Activated naive CD4-positive, alpha-beta T cell treated with anti-CD3 and anti-CD28 coated beads for 36 hours (primary cell): ENCODE measurements at regions of chr16 and their contacts with region 1.

Region 1: GRCh38 chr16:2867987-2868789 is 10.2 kb upstream of the PRSS22 start:
- DNase-seq: peak; percentile 98
- H3K4me3 Mint-ChIP-seq: peak overlapping the region; percentile 89
- H3K27ac Mint-ChIP-seq: peak overlapping the region; percentile 89
- H3K4me1 Mint-ChIP-seq: peaks cover 5% of the 10 kb centered on the region
- H3K27me3 Mint-ChIP-seq: no peaks in the 10 kb centered on the region

Region 2: DNA sequence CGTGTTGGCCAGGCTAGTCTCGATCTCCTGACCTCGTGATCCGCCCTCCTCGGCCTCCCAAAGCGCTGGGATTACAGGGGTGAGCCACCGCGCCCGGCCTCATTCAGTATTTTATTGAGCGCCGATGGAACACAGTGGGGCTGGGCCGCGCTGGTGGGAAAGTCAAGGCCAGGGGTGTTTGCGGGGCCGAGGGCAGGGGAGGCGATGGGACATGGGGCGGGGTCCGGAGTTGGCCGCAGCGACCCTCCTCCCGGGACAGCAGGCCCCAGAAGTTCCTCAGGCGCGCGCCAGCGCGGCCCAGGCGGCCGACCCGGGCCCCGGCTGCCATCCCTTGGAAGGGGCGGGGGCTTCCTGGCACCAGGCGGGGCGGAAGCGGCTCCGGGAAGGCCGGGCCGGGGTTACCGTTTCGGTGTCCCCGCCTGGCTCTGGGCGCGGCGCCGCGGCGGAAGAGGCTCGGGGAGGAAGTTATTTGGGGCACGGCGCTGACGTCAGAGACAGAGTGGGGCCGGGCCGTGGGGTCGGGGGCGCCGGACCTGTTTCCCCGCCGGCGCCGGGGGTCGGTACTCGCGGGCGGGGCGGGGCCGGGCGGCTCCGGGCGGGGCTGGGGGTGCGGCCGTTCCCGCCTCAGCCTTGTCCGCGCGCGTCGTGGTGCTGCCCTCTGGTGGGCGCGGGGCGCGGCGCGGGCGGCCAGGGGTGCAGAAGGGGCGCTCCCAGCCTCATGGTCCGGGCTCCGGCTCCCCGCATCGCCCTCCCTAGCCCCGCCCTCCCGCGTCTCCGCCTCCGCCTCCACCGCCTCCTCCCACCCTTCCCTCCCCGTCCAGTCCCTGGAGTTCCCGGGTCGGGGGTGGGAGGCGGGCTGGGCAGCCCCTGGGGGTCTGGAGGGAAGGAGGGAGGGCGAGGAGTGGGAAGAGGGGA is 147.2 kb before region 1 on chr16:
- CTCF ChIA-PET with region 1: interaction called, 3 read pairs
- intact Hi-C with region 1: loop called (anchors 1 kb)
- DNase-seq: peak; percentile 92
- H3K4me3 Mint-ChIP-seq: peak overlapping the region; percentile 82
- H3K27ac Mint-ChIP-seq: peak overlapping the region; percentile 85
- H3K4me1 Mint-ChIP-seq: no peaks in the 10 kb centered on the region
- H3K27me3 Mint-ChIP-seq: peaks cover 2% of the 10 kb centered on the region

Region 3: DNA sequence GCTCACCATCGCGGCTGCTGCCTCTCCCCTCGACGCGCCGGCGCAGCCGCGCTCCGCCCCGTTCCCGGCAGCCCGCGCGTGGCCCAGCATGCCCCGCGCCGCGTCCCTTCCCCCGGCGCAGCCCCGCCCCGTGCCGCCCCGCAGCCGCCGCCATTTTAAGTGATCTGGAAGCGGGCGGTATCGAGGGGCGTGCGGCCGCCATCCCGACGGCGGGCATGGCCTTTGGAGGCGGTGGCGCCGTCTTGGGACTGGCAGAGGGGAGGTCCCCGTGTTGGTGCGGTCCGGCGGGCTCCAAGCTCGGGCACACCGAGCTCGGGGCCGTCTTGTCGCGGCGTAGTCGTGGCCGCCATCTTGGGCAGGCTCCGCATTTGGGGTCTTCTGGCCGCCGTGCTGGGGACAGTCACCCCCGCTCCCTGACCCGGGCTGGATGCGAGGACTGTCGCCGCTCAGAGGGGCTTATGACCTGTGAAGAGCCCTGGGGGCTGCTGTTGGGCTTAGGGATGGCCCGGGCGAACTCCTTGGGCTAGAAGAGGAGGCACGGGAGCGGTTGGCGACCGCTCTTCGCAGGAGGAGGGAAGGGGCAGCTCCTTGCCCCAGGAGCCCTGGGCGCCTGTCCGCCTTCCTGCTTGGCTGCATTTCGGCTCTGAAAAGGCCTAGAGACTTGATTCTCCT is 90.8 kb before region 1 on chr16 and contains the start of gene ELOB:
- CTCF ChIA-PET with region 1: interaction called, 3 read pairs
- intact Hi-C with region 1: loop called (anchors 2 kb)
- DNase-seq: peak; percentile 91
- H3K4me3 Mint-ChIP-seq: peak within 1 kb of the TSS; percentile 94
- H3K27ac Mint-ChIP-seq: peak within 1 kb of the TSS; percentile 96
- H3K4me1 Mint-ChIP-seq: peaks cover 31% of the 10 kb centered on the region
- H3K27me3 Mint-ChIP-seq: no peaks in the 10 kb centered on the region
- total RNA-seq, gene ELOB: 177 to 189 TPM

Region 4: GRCh38 chr16:2838928-2839327 is 29.3 kb before region 1 on chr16:
- CTCF ChIA-PET with region 1: interaction called, 41 read pairs
- intact Hi-C with region 1: loop called (anchors 1 kb)
- DNase-seq: peak; percentile 73
- H3K4me3 Mint-ChIP-seq: no peak overlapping the region
- H3K27ac Mint-ChIP-seq: no peak overlapping the region
- H3K4me1 Mint-ChIP-seq: peaks cover 32% of the 10 kb centered on the region
- H3K27me3 Mint-ChIP-seq: peaks cover 3% of the 10 kb centered on the region

Region 5: GRCh38 chr16:2854700-2855309 is 13.4 kb before region 1 on chr16:
- CTCF ChIA-PET with region 1: interaction called, 11 read pairs
- intact Hi-C with region 1: loop called (anchors 1 kb)
- DNase-seq: peak; percentile 40
- H3K4me3 Mint-ChIP-seq: no peak overlapping the region
- H3K27ac Mint-ChIP-seq: no peak overlapping the region
- H3K4me1 Mint-ChIP-seq: peaks cover 5% of the 10 kb centered on the region
- H3K27me3 Mint-ChIP-seq: peaks cover 3% of the 10 kb centered on the region

Region 6: DNA sequence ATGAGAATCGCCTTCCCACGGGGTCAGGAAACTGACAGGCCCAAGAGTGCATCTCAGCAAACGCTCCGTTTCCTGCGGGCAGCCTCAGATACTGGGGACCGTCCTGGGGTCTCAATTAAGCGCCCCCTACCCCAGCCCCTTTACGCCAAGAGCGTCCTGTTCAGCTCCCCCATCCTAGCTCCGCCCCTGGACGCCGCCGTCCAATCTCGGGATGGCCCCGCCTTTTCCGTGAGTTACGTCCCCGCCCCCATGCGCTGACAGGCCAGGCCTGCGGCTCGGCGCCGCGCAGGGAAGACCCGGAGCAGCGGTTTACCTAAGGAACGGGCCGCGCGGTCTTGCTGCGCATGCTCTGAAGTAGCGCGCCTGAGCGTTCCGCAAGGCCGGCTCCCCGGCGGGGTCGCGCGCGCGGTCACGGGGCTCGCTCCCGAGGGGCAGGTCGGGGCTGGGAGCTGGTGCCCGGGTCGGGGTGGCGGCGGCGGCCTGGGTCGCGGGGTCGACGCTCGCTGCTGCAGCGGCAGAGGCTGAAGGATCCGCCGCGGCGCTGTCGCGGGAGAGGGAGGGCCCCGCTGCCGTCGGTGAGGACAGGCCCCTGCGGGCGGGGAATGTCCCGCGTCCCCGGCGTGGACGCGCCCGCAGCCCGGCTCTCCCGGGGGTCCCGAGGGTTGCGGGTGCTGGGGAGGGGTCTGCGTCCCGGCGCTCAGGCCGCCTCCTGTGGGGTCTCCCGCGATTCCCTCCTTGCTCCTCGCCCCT is 43.6 kb after region 1 on chr16 and contains the start of gene FLYWCH1:
- CTCF ChIA-PET with region 1: interaction called, 5 read pairs
- intact Hi-C with region 1: loop called (anchors 1 kb)
- DNase-seq: peak; percentile 100
- H3K4me3 Mint-ChIP-seq: peak within 1 kb of the TSS; percentile 88
- H3K27ac Mint-ChIP-seq: peak within 1 kb of the TSS; percentile 79
- H3K4me1 Mint-ChIP-seq: peaks cover 27% of the 10 kb centered on the region
- H3K27me3 Mint-ChIP-seq: no peaks in the 10 kb centered on the region
- total RNA-seq, gene FLYWCH1: 33.5 to 35.4 TPM